ENCODE measurements at regions of chr6 and their contacts with region 1.

Region 1: GRCh38 chr6:100099189-100100074 is 105.4 kb upstream of the MCHR2 start:
- DNase-seq: no peak
- H3K4me3 ChIP-seq: no peak overlapping the region
- H3K27ac ChIP-seq: no peak overlapping the region
- H3K4me1 ChIP-seq: no peaks in the 10 kb centered on the region
- H3K27me3 ChIP-seq: no peaks in the 10 kb centered on the region
- CTCF ChIP-seq: peak in 3 of 4 experiments; percentile 40 to 50 (median 43)
- POLR2A ChIP-seq: no peak

Region 2: DNA sequence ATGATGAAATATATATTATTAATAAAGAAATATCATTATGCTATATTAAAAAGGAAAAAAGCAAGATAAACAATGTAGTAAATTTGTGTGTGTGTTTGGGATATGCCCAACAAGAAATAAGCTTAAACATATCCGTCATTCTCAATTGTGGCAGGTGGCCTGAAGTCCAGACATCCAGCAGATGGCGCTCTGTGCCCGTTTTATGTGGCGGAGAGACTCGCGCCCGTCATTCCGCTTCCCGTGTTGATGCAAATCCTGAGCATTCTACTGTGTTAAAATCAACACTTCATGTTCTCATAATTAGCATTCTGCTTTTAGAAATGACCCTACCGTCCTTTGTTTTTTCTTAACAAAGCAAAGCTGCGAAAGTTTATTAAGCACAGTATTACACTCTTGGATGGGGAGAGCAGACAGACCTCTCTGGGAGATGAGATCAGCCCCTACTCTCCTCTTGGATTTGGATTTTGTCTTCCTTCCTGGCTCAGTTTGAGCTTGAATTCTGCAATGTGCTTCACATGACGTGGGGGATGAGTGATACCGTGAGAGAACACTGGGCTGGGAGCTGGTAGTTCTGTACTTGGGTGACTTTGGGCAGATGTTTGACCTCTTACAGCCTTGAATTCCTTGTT is 231.2 kb before region 1 on chr6:
- intact Hi-C with region 1: loop called (anchors 2 kb)
- DNase-seq: peak; percentile 60
- H3K4me3 ChIP-seq: no peak overlapping the region
- H3K27ac ChIP-seq: no peak overlapping the region
- H3K4me1 ChIP-seq: no peaks in the 10 kb centered on the region
- H3K27me3 ChIP-seq: no peaks in the 10 kb centered on the region
- CTCF ChIP-seq: peak; percentile 57 to 67 (median 62)
- POLR2A ChIP-seq: no peak

Region 3: GRCh38 chr6:100001915-100002388 is 97.5 kb before region 1 on chr6:
- intact Hi-C with region 1: loop called (anchors 2 kb)
- DNase-seq: peak; percentile 16
- H3K4me3 ChIP-seq: no peak overlapping the region
- H3K27ac ChIP-seq: no peak overlapping the region
- H3K4me1 ChIP-seq: no peaks in the 10 kb centered on the region
- H3K27me3 ChIP-seq: no peaks in the 10 kb centered on the region
- CTCF ChIP-seq: peak; percentile 51 to 66 (median 60)
- POLR2A ChIP-seq: no peak